ENCODE measurements at regions of chr11 and their contacts with region 1.

Region 1: DNA sequence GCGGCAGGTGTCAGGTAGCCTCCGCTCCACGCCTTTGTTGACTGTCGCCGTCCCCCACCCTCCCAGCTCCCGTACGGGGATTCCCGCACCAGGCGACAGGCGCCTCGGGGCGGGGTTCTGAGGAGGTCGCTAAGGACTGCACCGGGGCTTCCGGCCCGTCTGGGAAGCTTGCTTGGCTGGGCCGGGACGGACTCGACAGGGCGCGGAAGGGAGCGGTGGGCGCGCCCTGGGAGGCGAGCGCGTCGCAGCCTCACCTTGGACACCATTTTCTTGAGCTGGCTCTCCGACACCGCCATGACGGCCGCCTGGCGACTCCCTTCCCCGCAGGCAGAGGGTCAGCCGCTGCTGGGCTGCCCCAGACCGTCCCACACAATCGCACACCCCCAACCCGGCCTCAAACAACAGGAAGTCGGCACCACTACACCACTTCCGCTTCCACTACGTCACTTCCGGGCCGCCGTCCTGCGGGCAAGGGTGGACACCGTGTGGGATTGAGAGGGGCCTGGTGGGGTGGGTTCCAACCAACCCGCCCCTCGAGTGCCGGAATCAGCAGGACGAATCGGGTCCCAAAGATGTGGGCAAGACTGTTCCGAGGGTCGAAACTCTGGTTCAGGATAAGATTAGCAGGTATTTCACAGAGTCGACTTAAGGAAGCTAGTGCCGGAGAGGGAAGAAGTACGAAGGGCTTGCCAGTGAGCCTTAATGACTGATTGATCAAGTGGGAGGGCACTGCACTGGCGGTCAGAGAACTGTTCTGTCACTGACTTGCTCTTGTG is at the start of gene TSG101:
- DNase-seq: peak; percentile 93 to 98 (median 96)
- H3K4me3 ChIP-seq: peak within 1 kb of the TSS; percentile 59 to 100 (median 96)
- H3K27ac ChIP-seq: peak within 1 kb of the TSS; percentile 45 to 97 (median 89)
- H3K27me3 ChIP-seq: no peaks in the 10 kb centered on the region
- CTCF ChIP-seq: peak in 18 of 56 donors; percentile 7 to 39 (median 16)
- total RNA-seq, gene TSG101: 26.8 to 73.5 (median 51.6) TPM

Region 2: GRCh38 chr11:18321980-18322711 is 204.6 kb before region 1 on chr11 and contains the starts of genes GTF2H1 and HPS5:
- intact Hi-C with region 1: loop called (anchors 2 to 5 kb)
- DNase-seq: peak; percentile 94 to 97 (median 96)
- H3K4me3 ChIP-seq: peak within 1 kb of the TSS; percentile 48 to 99 (median 92)
- H3K27ac ChIP-seq: peak within 1 kb of the TSS; percentile 91 to 100 (median 99)
- H3K27me3 ChIP-seq: no peaks in the 10 kb centered on the region
- CTCF ChIP-seq: peak in 13 of 56 donors; percentile 3 to 47 (median 17)
- total RNA-seq, gene GTF2H1: 30.5 to 68.1 (median 49.7) TPM
- total RNA-seq, gene HPS5: 12.8 to 35.8 (median 20.1) TPM

Region 3: DNA sequence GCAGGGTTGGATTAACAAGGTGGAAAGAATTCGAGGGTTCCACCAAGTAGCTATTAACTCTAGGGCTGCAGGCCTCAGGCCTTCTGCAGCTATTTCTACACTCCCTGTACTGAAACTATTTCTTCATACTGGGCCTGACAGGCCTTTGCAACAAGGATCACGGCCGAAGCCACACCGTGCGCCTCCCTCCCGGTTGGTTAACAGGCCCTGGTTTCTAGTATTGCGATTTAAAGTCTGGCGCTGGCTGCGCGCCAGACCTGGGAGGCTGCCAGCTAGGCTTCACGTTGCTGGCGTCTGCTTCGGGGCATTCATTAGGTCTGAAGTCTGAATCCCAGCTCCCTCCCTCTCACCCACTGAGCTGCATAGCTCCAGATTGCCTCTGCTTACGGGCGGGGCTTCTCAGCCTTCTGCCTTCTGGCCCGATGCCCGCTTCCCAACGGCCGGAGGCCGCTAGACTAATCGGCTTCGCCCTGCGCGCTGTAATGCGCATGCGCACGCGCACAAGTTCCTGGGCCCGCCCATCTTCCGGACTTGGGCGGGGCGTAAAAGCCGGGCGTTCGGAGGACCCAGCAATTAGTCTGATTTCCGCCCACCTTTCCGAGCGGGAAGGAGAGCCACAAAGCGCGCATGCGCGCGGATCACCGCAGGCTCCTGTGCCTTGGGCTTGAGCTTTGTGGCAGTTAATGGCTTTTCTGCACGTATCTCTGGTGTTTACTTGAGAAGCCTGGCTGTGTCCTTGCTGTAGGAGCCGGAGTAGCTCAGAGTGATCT is 130.8 kb before region 1 on chr11:
- intact Hi-C with region 1: loop called (anchors 5 to 10 kb)
- DNase-seq: peak; percentile 92 to 98 (median 96)
- H3K4me3 ChIP-seq: peak overlapping the region; percentile 65 to 97 (median 87)
- H3K27ac ChIP-seq: peak overlapping the region; percentile 32 to 98 (median 92)
- H3K27me3 ChIP-seq: no peaks in the 10 kb centered on the region
- CTCF ChIP-seq: peak in 22 of 56 donors; percentile 8 to 53 (median 24)

Region 4: DNA sequence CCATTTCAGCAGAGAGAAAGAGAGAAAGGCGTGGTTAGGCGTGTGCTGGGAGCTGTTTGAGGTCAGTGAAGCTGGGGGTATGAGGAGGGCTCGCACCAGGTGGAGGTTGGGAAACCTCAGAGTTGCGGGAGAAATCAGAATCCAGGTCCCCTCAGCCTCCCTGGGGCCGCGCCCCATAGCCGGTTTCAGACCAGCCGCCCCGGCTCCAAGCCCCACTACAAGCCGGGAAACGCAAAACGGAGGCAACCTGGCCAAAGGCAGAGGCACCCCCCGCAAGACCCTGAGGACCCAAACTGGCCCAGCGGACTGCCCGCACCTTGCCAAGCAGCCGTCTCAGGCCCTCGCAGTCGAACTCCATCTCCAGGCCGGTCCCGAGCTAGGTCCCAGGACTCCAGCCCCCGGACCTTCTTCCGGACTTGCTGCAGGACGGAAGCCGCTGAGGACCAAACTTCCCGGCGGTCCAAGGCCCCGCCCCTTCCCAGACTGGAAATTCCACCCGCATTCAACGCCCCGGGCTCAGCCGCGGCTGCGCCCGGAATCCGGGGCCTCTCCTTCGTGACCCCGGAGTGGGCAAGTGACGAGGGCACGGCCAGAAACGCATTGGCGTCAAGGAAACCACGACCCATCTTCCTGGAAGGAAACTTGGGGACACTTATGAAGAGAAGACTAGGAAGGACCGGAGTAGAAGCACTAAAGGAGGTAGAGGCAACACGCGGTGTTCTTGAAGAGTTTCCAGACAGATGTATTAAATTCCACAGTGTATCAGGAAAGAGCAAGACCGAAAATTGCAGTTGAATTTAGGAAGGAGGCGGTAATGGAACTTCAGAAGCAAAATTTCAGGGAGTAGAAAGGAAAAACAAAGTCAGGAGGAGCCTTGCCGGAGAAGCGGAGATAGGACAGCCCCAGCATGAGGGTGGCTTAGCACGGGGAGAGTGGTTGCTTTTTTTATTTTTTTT is 61.9 kb after region 1 on chr11 and contains the start of gene UEVLD:
- intact Hi-C with region 1: loop called (anchors 2 to 5 kb)
- DNase-seq: peak; percentile 78 to 92 (median 84)
- H3K4me3 ChIP-seq: peak within 1 kb of the TSS; percentile 58 to 100 (median 90)
- H3K27ac ChIP-seq: peak within 1 kb of the TSS in 58 of 59 donors; percentile 16 to 90 (median 76)
- H3K27me3 ChIP-seq: no peaks in the 10 kb centered on the region
- CTCF ChIP-seq: peak in 33 of 56 donors; percentile 10 to 50 (median 25)
- total RNA-seq, gene UEVLD: 7.9 to 27.1 (median 16.5) TPM